ENCODE measurements at regions of chr2 and their contacts with region 1.

Region 1: GRCh38 chr2:178796079-178796677 is 11.0 kb downstream of the TTN start:
- DNase-seq: no peak
- H3K4me3 Mint-ChIP-seq: no peak overlapping the region
- H3K27ac Mint-ChIP-seq: no peak overlapping the region
- H3K4me1 Mint-ChIP-seq: no peaks in the 10 kb centered on the region
- H3K27me3 Mint-ChIP-seq: no peaks in the 10 kb centered on the region
- CTCF ChIP-seq: peak; percentile 53

Region 2: DNA sequence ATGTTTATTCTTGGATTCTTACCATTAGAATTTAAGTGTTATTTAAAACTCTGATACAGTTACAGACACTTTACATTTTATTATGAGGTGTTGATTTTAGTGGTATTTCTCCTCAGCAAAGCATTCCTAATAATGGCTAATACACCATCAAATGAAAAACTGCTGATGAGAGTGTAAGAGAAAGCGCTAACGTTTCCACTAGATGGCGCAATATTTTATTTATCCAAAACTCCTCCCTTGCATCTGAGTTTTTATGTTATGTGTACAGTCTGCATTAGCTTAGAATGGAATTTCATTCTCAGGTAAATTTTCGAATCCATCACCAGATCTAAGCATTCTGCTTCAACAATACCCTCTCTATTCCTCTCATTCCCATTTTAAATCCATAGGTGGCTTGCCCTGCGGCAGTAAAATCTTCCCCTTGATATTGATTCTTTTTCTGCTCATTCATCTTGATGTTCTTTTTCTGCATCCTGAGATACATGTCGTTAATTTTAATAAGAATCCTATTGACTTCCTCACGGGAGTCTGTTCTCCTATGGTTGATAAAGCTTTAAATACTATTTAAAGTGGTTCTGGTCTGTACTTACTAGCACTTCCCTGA is 399.1 kb before region 1 on chr2:
- CTCF ChIA-PET with region 1: no interaction called
- intact Hi-C with region 1: no loop called
- DNase-seq: peak; percentile 11
- H3K4me3 Mint-ChIP-seq: no peak overlapping the region
- H3K27ac Mint-ChIP-seq: no peak overlapping the region
- H3K4me1 Mint-ChIP-seq: no peaks in the 10 kb centered on the region
- H3K27me3 Mint-ChIP-seq: no peaks in the 10 kb centered on the region
- CTCF ChIP-seq: peak; percentile 34

Region 3: GRCh38 chr2:178819992-178820391 is 23.8 kb after region 1 on chr2:
- CTCF ChIA-PET with region 1: no interaction called
- intact Hi-C with region 1: no loop called
- DNase-seq: no peak
- H3K4me3 Mint-ChIP-seq: no peak overlapping the region
- H3K27ac Mint-ChIP-seq: no peak overlapping the region
- H3K4me1 Mint-ChIP-seq: no peaks in the 10 kb centered on the region
- H3K27me3 Mint-ChIP-seq: no peaks in the 10 kb centered on the region
- CTCF ChIP-seq: no peak

Region 4: GRCh38 chr2:178882666-178883440 is 86.7 kb after region 1 on chr2:
- CTCF ChIA-PET with region 1: no interaction called
- intact Hi-C with region 1: no loop called
- DNase-seq: no peak
- H3K4me3 Mint-ChIP-seq: no peak overlapping the region
- H3K27ac Mint-ChIP-seq: no peak overlapping the region
- H3K4me1 Mint-ChIP-seq: peaks cover 5% of the 10 kb centered on the region
- H3K27me3 Mint-ChIP-seq: no peaks in the 10 kb centered on the region
- CTCF ChIP-seq: no peak

Region 5: DNA sequence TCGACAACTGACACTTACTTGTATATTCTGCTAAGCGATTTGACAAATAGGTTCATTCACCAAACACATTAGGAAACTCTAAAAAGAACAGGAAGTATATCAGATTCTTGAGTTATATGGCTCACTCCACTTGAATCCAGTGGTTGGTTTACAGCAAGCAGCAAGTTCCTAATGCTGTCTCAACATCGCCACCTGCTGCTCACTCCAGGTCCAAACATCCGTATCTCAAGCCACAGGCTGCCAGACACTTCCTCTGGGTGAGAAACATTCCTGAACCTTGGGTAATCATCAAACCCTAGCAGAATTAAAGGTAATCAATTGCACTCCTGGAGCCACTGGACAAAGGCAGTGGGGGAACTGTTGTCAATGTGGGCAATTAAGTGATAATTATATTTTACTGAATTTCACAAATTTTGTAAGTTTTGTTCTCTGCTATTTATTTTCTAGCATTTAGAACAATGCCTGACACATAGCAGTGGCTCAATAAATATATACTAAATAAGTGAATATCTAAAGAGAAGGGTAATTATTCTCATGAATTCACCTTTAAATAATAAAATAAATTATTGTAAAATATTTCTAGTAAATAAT is 118.2 kb after region 1 on chr2:
- CTCF ChIA-PET with region 1: interaction called, 3 read pairs
- intact Hi-C with region 1: loop called (anchors 1 kb)
- DNase-seq: peak; percentile 83
- H3K4me3 Mint-ChIP-seq: no peak overlapping the region
- H3K27ac Mint-ChIP-seq: no peak overlapping the region
- H3K4me1 Mint-ChIP-seq: peaks cover 7% of the 10 kb centered on the region
- H3K27me3 Mint-ChIP-seq: no peaks in the 10 kb centered on the region
- CTCF ChIP-seq: peak; percentile 83

Region 6: GRCh38 chr2:179020156-179020750 is 224.1 kb after region 1 on chr2:
- CTCF ChIA-PET with region 1: no interaction called
- intact Hi-C with region 1: loop called (anchors 2 kb)
- DNase-seq: peak; percentile 63
- H3K4me3 Mint-ChIP-seq: no peak overlapping the region
- H3K27ac Mint-ChIP-seq: no peak overlapping the region
- H3K4me1 Mint-ChIP-seq: no peaks in the 10 kb centered on the region
- H3K27me3 Mint-ChIP-seq: no peaks in the 10 kb centered on the region
- CTCF ChIP-seq: peak; percentile 55

Region 7: GRCh38 chr2:179106676-179107428 is 310.7 kb after region 1 on chr2:
- CTCF ChIA-PET with region 1: no interaction called
- intact Hi-C with region 1: loop called (anchors 5 kb)
- DNase-seq: peak; percentile 70
- H3K4me3 Mint-ChIP-seq: peak overlapping the region; percentile 19
- H3K27ac Mint-ChIP-seq: peak overlapping the region; percentile 56
- H3K4me1 Mint-ChIP-seq: peaks cover 41% of the 10 kb centered on the region
- H3K27me3 Mint-ChIP-seq: no peaks in the 10 kb centered on the region
- CTCF ChIP-seq: no peak